Breast epithelium (tissue), 4 donors: ENCODE measurements at regions of chr11 and their contacts with region 1.

Region 1: GRCh38 chr11:46373787-46374740 is 7.4 kb upstream of the MDK start:
- DNase-seq: no peak
- H3K4me3 ChIP-seq: no peak overlapping the region
- H3K27ac ChIP-seq: no peak overlapping the region
- H3K4me1 ChIP-seq: no peaks in the 10 kb centered on the region
- H3K27me3 ChIP-seq: no peaks in the 10 kb centered on the region
- CTCF ChIP-seq: no peak
- POLR2A ChIP-seq: no peak

Region 2: DNA sequence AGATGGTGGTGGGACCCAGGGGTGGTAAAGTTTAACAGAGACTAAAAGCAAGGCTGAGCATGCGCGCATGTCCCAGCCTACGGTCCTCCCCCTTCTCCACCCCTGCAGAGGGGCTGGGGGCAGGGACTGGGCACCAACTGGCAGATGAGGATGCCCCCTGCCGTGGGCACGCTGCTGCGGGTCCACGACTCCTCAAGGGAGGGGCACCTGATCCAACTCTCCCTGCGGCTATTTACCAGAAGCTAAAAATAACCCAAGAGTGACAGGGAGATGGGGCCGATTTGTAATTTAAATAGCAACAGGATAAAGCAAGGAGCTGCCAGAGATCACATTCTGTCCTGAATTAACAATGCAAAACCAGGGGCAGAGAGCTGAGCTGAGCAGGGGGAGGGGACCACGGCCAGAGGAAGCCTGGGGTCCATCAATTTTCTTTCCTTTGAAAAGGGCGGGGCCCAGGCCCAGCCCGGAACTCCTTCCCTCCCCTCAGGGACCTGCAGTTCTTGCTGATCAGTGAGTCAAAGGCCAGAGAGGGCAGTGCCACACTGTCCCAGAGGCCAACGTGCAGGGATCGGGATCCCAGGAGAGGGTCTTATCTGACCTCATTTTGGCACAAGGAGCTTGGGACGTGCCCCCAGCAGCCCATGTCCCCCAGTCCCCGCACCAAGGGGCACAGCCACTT is 34.9 kb before region 1 on chr11:
- intact Hi-C with region 1: loop called (anchors 1 kb)
- DNase-seq: no peak
- H3K4me3 ChIP-seq: peak overlapping the region; percentile 21 to 57 (median 26)
- H3K27ac ChIP-seq: peak overlapping the region; percentile 61 to 77
- H3K4me1 ChIP-seq: no peaks in the 10 kb centered on the region
- H3K27me3 ChIP-seq: no peaks in the 10 kb centered on the region
- CTCF ChIP-seq: no peak
- POLR2A ChIP-seq: no peak

Region 3: GRCh38 chr11:46404476-46405017 is 30.5 kb after region 1 on chr11:
- intact Hi-C with region 1: no loop called
- DNase-seq: no peak
- H3K4me3 ChIP-seq: no peak overlapping the region
- H3K27ac ChIP-seq: no peak overlapping the region
- H3K4me1 ChIP-seq: no peaks in the 10 kb centered on the region
- H3K27me3 ChIP-seq: no peaks in the 10 kb centered on the region
- CTCF ChIP-seq: no peak
- POLR2A ChIP-seq: no peak